Activated naive CD4-positive, alpha-beta T cell treated with anti-CD3 and anti-CD28 coated beads for 36 hours (primary cell): ENCODE measurements at regions of chr13 and their contacts with region 1.

Region 1: DNA sequence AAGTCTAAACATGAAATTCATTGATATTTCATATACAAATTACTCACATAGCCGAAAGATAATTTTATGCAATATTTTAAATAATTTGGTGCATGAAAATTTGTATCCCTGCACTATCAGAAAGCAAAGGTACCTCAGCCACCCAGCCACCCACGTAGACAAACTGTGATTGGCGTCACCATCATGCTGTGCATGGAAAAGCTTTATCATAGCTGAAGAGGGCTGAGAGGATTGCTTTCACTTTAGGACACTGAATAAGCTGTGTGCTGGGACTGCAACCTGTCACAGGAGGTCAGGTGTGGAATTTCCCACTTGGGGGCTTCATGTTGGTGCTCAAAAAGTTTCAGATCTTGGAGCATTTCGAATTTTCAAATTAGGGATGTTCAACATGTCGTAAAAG is 96.3 kb downstream of the MYCBP2 start:
- DNase-seq: no peak
- H3K4me3 Mint-ChIP-seq: no peak overlapping the region
- H3K27ac Mint-ChIP-seq: no peak overlapping the region
- H3K4me1 Mint-ChIP-seq: peaks cover 17% of the 10 kb centered on the region
- H3K27me3 Mint-ChIP-seq: no peaks in the 10 kb centered on the region

Region 2: DNA sequence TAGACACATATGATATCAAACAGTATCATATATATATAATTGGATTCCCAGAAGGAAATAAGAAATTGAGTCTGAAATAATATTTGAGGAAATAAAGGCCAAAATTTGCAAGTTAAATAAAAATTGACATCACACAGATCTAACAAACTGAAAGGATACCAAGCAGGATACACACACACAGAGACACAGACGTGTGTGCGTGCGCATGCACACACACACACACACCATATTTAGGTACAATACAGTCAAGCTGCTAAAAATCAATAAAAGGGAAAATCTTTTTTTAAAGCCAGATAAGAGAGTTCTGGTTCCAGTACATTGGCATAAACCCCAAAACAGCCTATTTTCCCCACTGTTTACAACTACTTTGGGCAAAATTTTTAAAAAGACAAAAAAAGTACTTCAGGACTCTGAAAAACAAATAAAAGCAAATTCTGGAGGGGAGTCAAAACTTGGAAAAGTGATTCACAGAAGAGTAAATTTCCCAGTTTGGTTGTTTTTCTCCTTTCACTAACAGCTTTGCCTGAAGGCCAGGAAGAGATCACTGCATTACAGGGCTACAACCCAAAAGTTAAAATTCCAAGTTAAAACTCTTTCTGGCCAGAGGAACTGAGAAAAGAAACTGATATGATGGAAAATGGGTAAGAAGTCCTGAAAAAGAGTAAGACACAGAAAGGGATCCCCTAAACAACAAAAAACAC is 80.2 kb after region 1 on chr13:
- CTCF ChIA-PET with region 1: no interaction called
- intact Hi-C with region 1: loop called (anchors 5 kb)
- DNase-seq: no peak
- H3K4me3 Mint-ChIP-seq: no peak overlapping the region
- H3K27ac Mint-ChIP-seq: peak overlapping the region; percentile 21
- H3K4me1 Mint-ChIP-seq: peaks cover 85% of the 10 kb centered on the region
- H3K27me3 Mint-ChIP-seq: no peaks in the 10 kb centered on the region